GM10248 (cell line): ENCODE measurements at regions of chr9 and their contacts with region 1.

Region 1: GRCh38 chr9:27539479-27540441 is 10.1 kb upstream of the MOB3B start:
- DNase-seq: no peak
- CTCF ChIP-seq: no peak

Region 2: DNA sequence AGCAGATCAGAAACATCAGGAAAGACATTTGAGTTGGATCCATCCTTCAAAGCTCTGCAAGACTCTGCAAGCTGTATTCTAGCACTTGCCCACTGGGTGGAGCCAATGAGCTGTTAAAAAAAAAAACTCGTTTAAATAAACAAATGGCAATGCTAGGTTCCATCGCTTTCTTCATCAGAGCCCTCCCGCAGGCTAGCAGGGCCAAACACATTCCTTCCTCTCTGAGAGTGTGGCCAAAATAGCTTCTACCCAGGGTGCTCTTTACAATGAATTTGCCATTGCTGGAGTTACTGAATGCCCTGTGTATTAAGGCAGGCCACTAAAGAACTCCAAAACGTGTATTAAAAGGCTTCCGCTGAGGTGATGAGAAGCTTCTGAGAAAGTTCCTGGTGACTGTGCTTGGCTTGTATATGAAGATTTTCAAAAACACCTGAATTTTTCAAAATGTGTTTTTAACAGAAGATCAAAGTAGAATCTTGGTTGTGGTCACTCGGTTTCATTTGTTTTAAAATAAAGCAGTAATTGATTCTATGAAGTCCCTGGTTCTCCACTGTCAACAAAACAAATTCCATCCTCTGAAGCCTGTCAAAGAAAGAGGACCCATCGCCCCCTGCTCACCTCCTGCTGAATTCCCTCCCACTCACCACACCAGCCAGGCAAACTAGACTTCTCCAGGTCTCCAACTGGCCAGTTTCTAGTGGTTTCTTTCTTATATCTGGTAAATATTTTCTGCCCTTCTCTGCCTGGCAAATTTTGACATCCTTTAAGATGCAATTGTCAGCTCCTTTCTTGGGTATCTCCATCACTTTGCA is 206.3 kb before region 1 on chr9:
- CTCF ChIA-PET with region 1: interaction called, 11 read pairs
- POLR2A ChIA-PET with region 1: no interaction called
- DNase-seq: peak; percentile 73
- CTCF ChIP-seq: peak; percentile 69